ENCODE measurements at regions of chr6 and their contacts with region 1.

Region 1: DNA sequence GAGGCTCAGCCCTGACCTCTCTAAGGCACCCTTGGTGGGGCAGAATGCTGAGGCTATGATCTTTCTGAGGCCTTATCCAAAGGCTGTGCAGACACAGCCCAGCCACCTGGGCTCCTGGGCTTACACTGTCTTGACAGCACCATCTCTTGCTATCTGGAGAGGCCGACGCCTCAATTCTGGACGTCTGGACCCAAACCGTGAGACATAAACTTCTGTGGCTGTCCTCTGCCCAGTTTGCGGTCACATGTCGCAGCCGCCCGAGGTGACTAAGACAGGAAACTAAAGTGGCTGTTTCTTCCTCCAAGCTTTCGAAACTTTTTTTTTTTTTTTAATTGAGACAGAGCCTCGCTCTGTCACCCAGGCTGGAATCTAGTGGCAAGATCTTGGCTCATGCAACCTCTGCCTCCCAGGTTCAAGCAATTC is 49.3 kb downstream of the PRR18 start:
- DNase-seq: peak; percentile 94 to 97 (median 95)
- H3K4me3 ChIP-seq: peak overlapping the region in 1 of 3 experiments; percentile 49
- H3K4me3 Mint-ChIP-seq: peak overlapping the region; percentile 66 to 80
- H3K27ac ChIP-seq: peak overlapping the region; percentile 95 to 99
- H3K27ac Mint-ChIP-seq: peak overlapping the region; percentile 99 to 100 (median 99)
- H3K4me1 ChIP-seq: peaks cover 39 to 47% of the 10 kb centered on the region in 2 donors
- H3K4me1 Mint-ChIP-seq: peaks cover 58% of the 10 kb centered on the region
- H3K27me3 ChIP-seq: no peaks in the 10 kb centered on the region
- H3K27me3 Mint-ChIP-seq: peaks cover 8 to 15% (median 10%) of the 10 kb centered on the region in 3 donors
- CTCF ChIP-seq: no peak

Region 2: GRCh38 chr6:166382933-166383801 is 124.3 kb after region 1 on chr6 and contains the start of gene MPC1:
- intact Hi-C with region 1: loop called in 1 of 2 experiments (anchors 5 kb)
- DNase-seq: peak; percentile 91 to 93 (median 92)
- H3K4me3 ChIP-seq: peak within 1 kb of the TSS; percentile 89 to 97 (median 92)
- H3K4me3 Mint-ChIP-seq: peak within 1 kb of the TSS; percentile 94 to 95
- H3K27ac ChIP-seq: peak within 1 kb of the TSS; percentile 81 to 86
- H3K27ac Mint-ChIP-seq: peak within 1 kb of the TSS; percentile 88 to 95 (median 90)
- H3K4me1 ChIP-seq: peaks cover 14 to 25% of the 10 kb centered on the region in 2 donors
- H3K4me1 Mint-ChIP-seq: peaks cover 23% of the 10 kb centered on the region
- H3K27me3 ChIP-seq: no peaks in the 10 kb centered on the region
- H3K27me3 Mint-ChIP-seq: no peaks in the 10 kb centered on the region
- CTCF ChIP-seq: peak; percentile 44
- polyA plus RNA-seq, gene MPC1: 52.4 to 122 (median 104) TPM

Region 3: GRCh38 chr6:166553563-166554271 is 294.9 kb after region 1 on chr6:
- intact Hi-C with region 1: no loop called
- DNase-seq: no peak
- H3K4me3 ChIP-seq: no peak overlapping the region
- H3K4me3 Mint-ChIP-seq: no peak overlapping the region
- H3K27ac ChIP-seq: no peak overlapping the region
- H3K27ac Mint-ChIP-seq: no peak overlapping the region
- H3K4me1 ChIP-seq: peaks cover 7 to 8% of the 10 kb centered on the region in 2 donors
- H3K4me1 Mint-ChIP-seq: peaks cover 12% of the 10 kb centered on the region
- H3K27me3 ChIP-seq: no peaks in the 10 kb centered on the region
- H3K27me3 Mint-ChIP-seq: peaks cover 0 to 3% (median 2%) of the 10 kb centered on the region in 3 donors
- CTCF ChIP-seq: no peak

Measured in CD14-positive monocyte (primary cell).